MCF 10A (cell line): ENCODE measurements at regions of chr3 and their contacts with region 1.

Region 1: GRCh38 chr3:115436767-115437301 is 186.5 kb upstream of the GAP43 start:
- DNase-seq: peak; percentile 95
- H3K4me3 Mint-ChIP-seq: no peak overlapping the region
- H3K27ac Mint-ChIP-seq: no peak overlapping the region
- H3K4me1 Mint-ChIP-seq: peaks cover 13% of the 10 kb centered on the region
- H3K27me3 Mint-ChIP-seq: no peaks in the 10 kb centered on the region
- CTCF ChIP-seq: peak; percentile 45

Region 2: GRCh38 chr3:115040673-115041286 is 396.1 kb before region 1 on chr3:
- CTCF ChIA-PET with region 1: no interaction called
- POLR2A ChIA-PET with region 1: no interaction called
- intact Hi-C with region 1: loop called (anchors 2 kb)
- DNase-seq: peak; percentile 51
- H3K4me3 Mint-ChIP-seq: no peak overlapping the region
- H3K27ac Mint-ChIP-seq: no peak overlapping the region
- H3K4me1 Mint-ChIP-seq: no peaks in the 10 kb centered on the region
- H3K27me3 Mint-ChIP-seq: no peaks in the 10 kb centered on the region
- CTCF ChIP-seq: peak; percentile 51

Region 3: DNA sequence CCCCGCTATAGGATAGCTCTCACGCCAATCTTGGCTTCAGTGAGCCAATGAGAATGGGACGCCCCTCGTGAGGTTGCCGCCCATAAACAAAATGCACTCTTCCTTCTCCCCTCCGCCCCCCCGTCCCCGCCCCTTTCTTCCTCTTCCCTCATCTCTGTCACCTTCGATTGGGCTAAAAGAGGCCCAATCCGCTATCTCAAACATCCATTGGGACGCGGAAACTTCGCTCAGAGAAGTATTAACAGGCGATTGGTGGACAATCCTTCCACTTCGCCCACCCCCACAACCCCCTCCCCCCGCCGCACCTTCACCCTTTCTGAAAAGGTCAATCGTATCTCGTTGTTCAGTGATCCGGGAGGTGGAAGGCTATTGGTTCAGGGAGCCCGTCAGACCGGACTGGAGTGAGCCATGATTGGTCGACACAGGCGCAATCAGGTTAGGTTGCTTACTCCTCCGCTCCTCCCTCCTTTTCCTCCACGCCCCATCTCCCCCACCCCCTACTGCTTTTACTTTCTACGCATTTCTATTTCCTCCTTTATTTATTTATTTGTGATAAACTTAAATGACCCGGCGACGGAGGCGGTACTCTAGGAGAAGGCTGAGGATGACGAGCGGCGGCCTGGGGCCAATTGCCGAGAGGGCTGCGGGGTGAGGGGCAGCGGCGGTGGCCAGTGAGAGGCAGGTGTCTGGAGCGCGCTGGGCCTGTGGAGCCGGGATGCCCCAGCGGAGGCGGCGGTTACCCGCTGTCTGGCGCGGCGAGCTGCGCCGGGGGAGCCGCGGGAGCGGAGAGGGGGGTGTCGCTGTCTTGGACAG is 289.3 kb before region 1 on chr3:
- CTCF ChIA-PET with region 1: no interaction called
- POLR2A ChIA-PET with region 1: no interaction called
- intact Hi-C with region 1: loop called (anchors 1 kb)
- DNase-seq: peak; percentile 100
- H3K4me3 Mint-ChIP-seq: peak overlapping the region; percentile 82
- H3K27ac Mint-ChIP-seq: peak overlapping the region; percentile 97
- H3K4me1 Mint-ChIP-seq: peaks cover 6% of the 10 kb centered on the region
- H3K27me3 Mint-ChIP-seq: no peaks in the 10 kb centered on the region
- CTCF ChIP-seq: no peak

Region 4: GRCh38 chr3:115239717-115240116 is 197.1 kb before region 1 on chr3:
- CTCF ChIA-PET with region 1: interaction called, 3 read pairs
- POLR2A ChIA-PET with region 1: no interaction called
- intact Hi-C with region 1: loop called (anchors 5 kb)
- DNase-seq: peak; percentile 89
- H3K4me3 Mint-ChIP-seq: no peak overlapping the region
- H3K27ac Mint-ChIP-seq: no peak overlapping the region
- H3K4me1 Mint-ChIP-seq: peaks cover 11% of the 10 kb centered on the region
- H3K27me3 Mint-ChIP-seq: no peaks in the 10 kb centered on the region
- CTCF ChIP-seq: no peak

Region 5: DNA sequence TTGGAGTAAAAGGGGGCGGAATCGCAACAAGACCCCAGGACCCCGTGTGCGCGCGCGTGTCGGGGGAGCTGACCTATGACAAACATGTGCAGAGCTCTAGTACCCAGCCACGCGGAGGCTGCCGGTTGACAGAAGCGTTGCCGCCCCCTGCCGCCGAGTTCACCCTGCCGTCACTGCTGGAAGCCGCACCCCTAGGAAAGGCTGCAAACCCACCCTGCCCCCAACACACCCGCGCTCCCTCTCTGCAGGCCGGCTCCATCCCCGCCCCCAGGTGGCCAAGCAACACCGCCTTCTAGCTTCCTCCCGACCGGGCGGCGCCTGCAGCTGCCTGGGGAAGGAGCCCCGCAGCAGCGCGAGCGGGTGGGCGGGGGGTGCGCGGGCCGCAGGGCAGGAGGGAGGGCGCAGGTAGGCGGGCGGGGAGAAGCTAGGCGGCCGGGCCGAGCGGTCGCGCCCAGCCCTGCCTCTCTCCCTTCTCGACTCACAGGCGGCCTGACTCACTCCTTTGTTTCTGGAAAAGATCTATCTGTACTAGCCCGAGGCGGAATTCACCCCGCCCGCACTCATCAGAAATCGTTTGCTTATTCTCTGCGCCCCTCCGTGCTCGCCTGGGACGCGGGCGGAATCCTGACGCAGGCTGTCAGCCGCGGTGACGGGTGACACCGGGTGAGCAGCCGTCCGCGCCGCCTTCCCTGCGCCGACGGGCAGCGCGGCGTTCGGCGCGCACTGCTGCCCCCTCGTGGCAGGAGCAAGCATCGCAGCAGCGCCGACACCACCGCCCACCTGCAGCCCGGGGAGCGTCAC is 347.3 kb after region 1 on chr3:
- CTCF ChIA-PET with region 1: no interaction called
- POLR2A ChIA-PET with region 1: no interaction called
- intact Hi-C with region 1: loop called (anchors 1 kb)
- DNase-seq: peak; percentile 86
- H3K4me3 Mint-ChIP-seq: peak overlapping the region; percentile 81
- H3K27ac Mint-ChIP-seq: peak overlapping the region; percentile 90
- H3K4me1 Mint-ChIP-seq: peaks cover 25% of the 10 kb centered on the region
- H3K27me3 Mint-ChIP-seq: no peaks in the 10 kb centered on the region
- CTCF ChIP-seq: peak; percentile 94